PC-9 (cell line): ENCODE measurements at regions of chr7 and their contacts with region 1.

Region 1: GRCh38 chr7:30164567-30164966 is 29.8 kb downstream of the MTURN start:
- DNase-seq: peak; percentile 32 to 68
- H3K4me3 ChIP-seq: no peak overlapping the region
- H3K27ac ChIP-seq: no peak overlapping the region
- H3K4me1 ChIP-seq: peaks cover 52% of the 10 kb centered on the region
- H3K27me3 ChIP-seq: no peaks in the 10 kb centered on the region
- CTCF ChIP-seq: peak; percentile 86

Region 2: GRCh38 chr7:30026229-30027064 is 138.1 kb before region 1 on chr7 and contains the start of gene FKBP14:
- CTCF ChIA-PET with region 1: no interaction called
- POLR2A ChIA-PET with region 1: no interaction called
- intact Hi-C with region 1: no loop called
- DNase-seq: peak; percentile 97 to 99
- H3K4me3 ChIP-seq: peak within 1 kb of the TSS; percentile 75
- H3K27ac ChIP-seq: peak within 1 kb of the TSS; percentile 66
- H3K4me1 ChIP-seq: peaks cover 43% of the 10 kb centered on the region
- H3K27me3 ChIP-seq: no peaks in the 10 kb centered on the region
- CTCF ChIP-seq: no peak
- total RNA-seq, gene FKBP14: 29.8 and 29.9 TPM in 2 replicates

Region 3: DNA sequence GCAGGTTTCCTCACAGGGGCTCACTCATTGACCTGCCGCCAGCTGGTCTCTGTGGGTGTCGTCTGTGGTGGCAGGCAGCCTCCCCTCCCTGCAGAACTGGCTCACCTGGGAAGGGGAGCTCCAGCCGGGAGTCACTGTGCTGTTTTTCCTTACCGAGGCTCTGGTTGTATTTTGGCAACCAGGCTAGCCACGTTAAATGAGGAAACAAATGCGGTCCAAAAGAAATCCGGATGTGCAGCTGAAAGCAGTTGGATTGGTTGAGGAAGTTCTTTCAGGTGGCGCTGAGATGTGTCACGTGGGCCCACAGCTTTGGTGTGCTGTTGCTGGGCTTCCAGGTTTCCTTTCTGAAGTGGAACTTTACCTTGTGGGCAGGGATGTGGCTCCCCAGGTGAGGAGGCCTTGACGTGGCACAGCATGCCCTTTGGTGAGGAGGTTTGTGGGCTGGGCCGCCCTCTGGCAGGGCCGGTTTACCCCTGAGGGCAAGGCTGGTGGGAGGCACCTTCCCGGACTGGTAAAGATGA is 15.6 kb before region 1 on chr7:
- CTCF ChIA-PET with region 1: interaction called, 3 read pairs
- POLR2A ChIA-PET with region 1: no interaction called
- intact Hi-C with region 1: loop called (anchors 2 kb)
- DNase-seq: peak; percentile 80 to 96
- H3K4me3 ChIP-seq: no peak overlapping the region
- H3K27ac ChIP-seq: no peak overlapping the region
- H3K4me1 ChIP-seq: peaks cover 16% of the 10 kb centered on the region
- H3K27me3 ChIP-seq: peaks cover 27% of the 10 kb centered on the region; the same call in 1 of the 2 replicates
- CTCF ChIP-seq: no peak

Region 4: GRCh38 chr7:30225863-30226613 is 61.5 kb after region 1 on chr7:
- CTCF ChIA-PET with region 1: no interaction called
- POLR2A ChIA-PET with region 1: interaction called, 5 read pairs
- intact Hi-C with region 1: loop called (anchors 2 kb)
- DNase-seq: peak; percentile 84 to 99
- H3K4me3 ChIP-seq: peak overlapping the region; percentile 43
- H3K27ac ChIP-seq: peak overlapping the region; percentile 97
- H3K4me1 ChIP-seq: peaks cover 33% of the 10 kb centered on the region
- H3K27me3 ChIP-seq: no peaks in the 10 kb centered on the region
- CTCF ChIP-seq: no peak

Region 5: DNA sequence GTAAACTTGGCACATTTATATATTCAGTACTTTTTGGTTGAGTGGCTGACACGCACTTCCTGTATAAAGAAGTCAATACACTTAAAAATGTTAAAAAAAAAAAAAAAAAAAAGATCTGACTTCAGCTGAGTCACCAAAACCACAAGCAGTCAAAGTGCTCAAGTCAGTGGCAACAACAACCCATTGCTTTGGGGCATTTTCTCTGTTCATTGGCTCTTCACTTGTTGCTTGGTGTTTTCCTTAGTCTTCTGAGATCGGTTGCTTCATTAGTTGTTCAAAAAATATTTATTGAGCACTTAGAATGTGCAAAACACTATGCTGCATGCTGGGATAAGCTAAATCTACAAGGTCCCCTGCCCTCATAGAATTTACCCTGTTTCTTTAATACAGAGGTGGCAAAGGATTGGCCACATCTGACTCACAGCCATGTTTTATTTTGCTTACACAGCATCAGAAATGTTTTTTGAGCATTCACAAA is 183.6 kb after region 1 on chr7:
- CTCF ChIA-PET with region 1: no interaction called
- POLR2A ChIA-PET with region 1: interaction called, 3 read pairs
- intact Hi-C with region 1: loop called (anchors 1 kb)
- DNase-seq: peak; percentile 56 to 95
- H3K4me3 ChIP-seq: peak overlapping the region; percentile 13; the same call in 1 of the 2 replicates
- H3K27ac ChIP-seq: peak overlapping the region; percentile 81
- H3K4me1 ChIP-seq: peaks cover 37% of the 10 kb centered on the region
- H3K27me3 ChIP-seq: no peaks in the 10 kb centered on the region
- CTCF ChIP-seq: no peak

Region 6: DNA sequence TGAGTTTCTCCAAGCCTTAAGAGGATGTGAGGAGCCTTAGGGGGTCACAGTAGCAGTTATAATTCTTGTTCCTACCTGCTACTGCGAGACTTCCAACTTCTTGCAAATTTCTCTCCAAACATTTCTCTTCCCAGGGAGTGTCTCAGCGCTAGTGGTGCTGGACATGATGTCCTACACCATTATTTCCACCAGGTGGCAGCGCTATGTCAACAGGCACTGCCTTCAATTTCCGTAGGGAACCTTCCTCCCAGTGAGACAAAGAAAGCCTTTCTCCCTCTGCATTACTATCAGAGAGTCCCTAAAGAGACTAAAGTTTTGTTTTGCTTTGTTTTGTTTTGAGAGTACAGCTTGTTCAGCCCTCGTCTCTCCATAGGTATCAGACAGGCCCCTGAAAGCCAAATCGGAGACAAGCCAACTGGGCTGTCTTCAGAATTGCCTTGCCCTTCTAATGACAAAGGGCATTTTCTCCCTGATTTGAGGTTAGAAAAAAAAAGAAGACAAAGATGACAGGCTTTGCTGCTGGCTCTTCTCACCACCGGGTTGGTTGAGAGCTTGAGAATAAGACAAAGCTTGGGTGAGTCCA is 384.3 kb after region 1 on chr7:
- CTCF ChIA-PET with region 1: interaction called, 3 read pairs
- POLR2A ChIA-PET with region 1: no interaction called
- intact Hi-C with region 1: loop called (anchors 5 kb)
- DNase-seq: peak; percentile 61 to 73
- H3K4me3 ChIP-seq: no peak overlapping the region
- H3K27ac ChIP-seq: no peak overlapping the region
- H3K4me1 ChIP-seq: peaks cover 32% of the 10 kb centered on the region
- H3K27me3 ChIP-seq: no peaks in the 10 kb centered on the region
- CTCF ChIP-seq: peak; percentile 93